HAP-1 (cell line): ENCODE measurements at regions of chr1 and their contacts with region 1.

Region 1: GRCh38 chr1:181479137-181479745 is 4.1 kb upstream of the CACNA1E start:
- DNase-seq: peak; percentile 48 to 50
- H3K4me3 ChIP-seq: no peak overlapping the region
- H3K4me1 ChIP-seq: no peaks in the 10 kb centered on the region
- H3K27me3 ChIP-seq: peaks cover 12% of the 10 kb centered on the region

Region 2: DNA sequence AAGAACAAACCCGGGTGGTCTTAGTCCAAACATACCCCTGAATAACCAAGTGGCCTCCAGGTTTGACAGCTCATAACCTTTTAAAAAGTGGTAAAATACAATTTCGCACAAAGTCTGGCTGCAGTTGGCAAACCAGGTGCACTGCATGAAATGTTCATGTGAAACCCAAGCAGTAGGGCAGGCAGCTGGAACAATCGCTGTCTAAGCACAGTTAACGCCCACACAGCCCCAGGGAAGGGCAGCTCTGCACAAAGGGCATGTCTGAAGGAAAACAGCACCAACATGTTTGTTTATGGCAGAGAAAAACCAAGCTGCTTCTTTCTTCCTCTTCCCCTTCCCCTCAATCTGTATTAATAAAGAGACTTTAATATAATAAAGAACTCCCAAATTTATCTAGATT is 517.1 kb before region 1 on chr1:
- in situ Hi-C with region 1: no loop called
- DNase-seq: no peak
- H3K4me3 ChIP-seq: no peak overlapping the region
- H3K4me1 ChIP-seq: no peaks in the 10 kb centered on the region
- H3K27me3 ChIP-seq: no peaks in the 10 kb centered on the region

Region 3: DNA sequence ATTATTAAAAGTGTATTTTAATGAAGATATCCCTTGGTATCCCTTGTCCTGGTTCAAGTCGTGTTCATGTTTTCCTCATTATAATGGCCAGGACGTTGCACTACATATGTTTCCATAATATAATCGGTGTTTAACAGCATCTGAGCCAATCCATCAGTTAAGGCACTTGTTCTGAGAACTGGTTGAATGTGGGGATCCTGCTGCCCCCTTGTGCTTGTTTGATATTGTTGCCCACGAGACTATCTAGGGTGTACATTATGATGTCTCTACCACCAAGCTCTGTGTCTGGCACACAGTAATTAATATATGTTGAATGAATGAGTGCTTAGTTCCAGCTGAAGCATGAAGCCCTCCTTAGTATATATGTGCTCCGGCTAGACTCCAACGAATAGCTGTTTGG is 197.0 kb after region 1 on chr1:
- in situ Hi-C with region 1: no loop called
- DNase-seq: peak in 1 of 2 experiments; percentile 18
- H3K4me3 ChIP-seq: no peak overlapping the region
- H3K4me1 ChIP-seq: no peaks in the 10 kb centered on the region
- H3K27me3 ChIP-seq: no peaks in the 10 kb centered on the region

Region 4: DNA sequence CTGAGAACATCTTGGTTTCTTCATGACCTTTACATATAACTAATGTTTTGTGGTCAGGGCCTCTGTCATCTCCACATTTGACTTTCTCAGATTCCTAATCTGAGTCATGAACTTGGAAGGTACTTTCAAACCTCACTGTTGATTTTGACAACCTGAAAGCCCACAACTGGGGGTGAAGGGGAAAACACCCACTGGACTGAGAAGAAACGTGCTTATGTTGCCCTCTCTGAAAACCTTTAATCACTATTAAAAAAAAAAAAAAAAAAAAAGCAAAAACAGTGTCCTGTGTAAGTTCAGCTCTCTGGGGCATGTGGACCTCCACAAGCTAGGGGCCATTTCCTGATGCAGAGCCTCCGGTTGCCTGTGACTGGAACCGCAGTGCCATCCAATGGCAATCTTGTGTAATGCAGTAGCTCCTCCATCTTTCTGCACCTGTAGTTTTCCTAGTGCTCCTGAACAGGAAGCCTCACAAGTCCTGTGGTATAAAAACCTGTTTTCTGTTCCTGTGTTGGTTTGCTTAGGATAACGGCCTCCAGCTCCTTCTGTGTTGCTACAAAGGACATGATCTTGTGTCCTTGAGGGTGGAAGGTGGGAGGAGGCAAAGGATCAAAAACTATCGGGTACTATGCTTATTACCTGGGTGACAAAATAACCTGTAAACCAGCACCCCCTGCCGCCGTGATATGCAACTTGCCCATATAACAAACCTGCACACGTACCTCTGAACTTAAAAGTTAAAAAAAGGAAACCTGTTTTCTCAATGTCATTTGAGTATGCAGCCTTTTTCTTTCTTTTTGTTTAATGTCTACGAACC is 457.7 kb after region 1 on chr1:
- in situ Hi-C with region 1: loop called (anchors 25 kb)
- DNase-seq: peak; percentile 29 to 68
- H3K4me3 ChIP-seq: no peak overlapping the region
- H3K4me1 ChIP-seq: no peaks in the 10 kb centered on the region
- H3K27me3 ChIP-seq: no peaks in the 10 kb centered on the region

Region 5: GRCh38 chr1:181985936-181986906 is 507.0 kb after region 1 on chr1:
- in situ Hi-C with region 1: no loop called
- DNase-seq: no peak
- H3K4me3 ChIP-seq: no peak overlapping the region
- H3K4me1 ChIP-seq: no peaks in the 10 kb centered on the region
- H3K27me3 ChIP-seq: no peaks in the 10 kb centered on the region; the same call in 1 of the 2 replicates

Region 6: GRCh38 chr1:182069028-182069466 is 589.8 kb after region 1 on chr1:
- in situ Hi-C with region 1: loop called (anchors 25 kb)
- DNase-seq: peak; percentile 58 to 79
- H3K4me3 ChIP-seq: no peak overlapping the region
- H3K4me1 ChIP-seq: no peaks in the 10 kb centered on the region
- H3K27me3 ChIP-seq: no peaks in the 10 kb centered on the region; the same call in 1 of the 2 replicates